ENCODE measurements at regions of chr3 and their contacts with region 1.

Region 1: DNA sequence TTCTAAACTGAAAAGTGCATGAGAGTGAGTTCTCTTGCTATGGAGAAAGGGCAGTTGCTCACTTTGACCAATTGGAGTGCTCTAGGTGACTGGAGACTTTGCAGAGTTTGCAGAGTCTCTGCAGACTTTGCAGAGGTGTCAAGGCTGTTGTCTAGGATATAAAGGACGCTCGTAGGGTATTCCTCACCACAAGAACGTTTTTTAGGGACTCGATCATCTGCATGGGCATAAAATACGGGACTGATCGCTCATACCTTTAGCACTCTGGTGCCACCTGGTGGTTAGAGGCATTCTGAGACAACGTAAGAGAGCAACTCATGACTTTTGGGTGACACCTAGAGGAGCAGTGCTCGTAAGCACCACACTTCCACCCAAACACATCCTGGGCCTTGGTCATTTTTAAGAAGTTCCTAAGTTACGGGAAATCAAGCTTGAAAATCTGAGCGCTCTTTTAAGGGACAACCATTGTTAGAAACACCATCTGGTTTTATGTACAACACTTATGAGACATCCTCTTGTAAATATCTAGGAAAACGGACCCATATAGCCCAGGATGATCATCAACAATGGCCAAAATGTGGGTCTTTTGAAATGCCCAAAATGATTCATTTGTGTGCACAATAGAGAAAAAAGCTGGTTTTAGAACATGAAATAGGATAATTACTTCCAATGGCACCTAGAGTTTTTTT is 51.6 kb upstream of the XCR1 start:
- DNase-seq: peak; percentile 83 to 84
- H3K4me3 ChIP-seq: no peak overlapping the region
- H3K27ac ChIP-seq: no peak overlapping the region; the same call in 1 of the 2 replicates
- H3K4me1 ChIP-seq: peaks cover 49% of the 10 kb centered on the region
- H3K27me3 ChIP-seq: no peaks in the 10 kb centered on the region
- CTCF ChIP-seq: peak; percentile 94

Region 2: GRCh38 chr3:45507820-45508317 is 571.0 kb before region 1 on chr3:
- CTCF ChIA-PET with region 1: no interaction called
- POLR2A ChIA-PET with region 1: no interaction called
- intact Hi-C with region 1: loop called (anchors 5 kb)
- DNase-seq: no peak
- H3K4me3 ChIP-seq: no peak overlapping the region
- H3K27ac ChIP-seq: no peak overlapping the region
- H3K4me1 ChIP-seq: no peaks in the 10 kb centered on the region
- H3K27me3 ChIP-seq: no peaks in the 10 kb centered on the region
- CTCF ChIP-seq: no peak

Region 3: GRCh38 chr3:45760878-45761711 is 317.8 kb before region 1 on chr3:
- CTCF ChIA-PET with region 1: interaction called, 5 read pairs
- POLR2A ChIA-PET with region 1: no interaction called
- intact Hi-C with region 1: loop called (anchors 1 kb)
- DNase-seq: peak; percentile 43 to 48
- H3K4me3 ChIP-seq: no peak overlapping the region
- H3K27ac ChIP-seq: no peak overlapping the region
- H3K4me1 ChIP-seq: no peaks in the 10 kb centered on the region
- H3K27me3 ChIP-seq: no peaks in the 10 kb centered on the region
- CTCF ChIP-seq: peak; percentile 81

Region 4: GRCh38 chr3:45841757-45842491 is 236.9 kb before region 1 on chr3 and contains the start of gene LZTFL1:
- CTCF ChIA-PET with region 1: no interaction called
- POLR2A ChIA-PET with region 1: no interaction called
- intact Hi-C with region 1: loop called (anchors 5 kb)
- DNase-seq: peak; percentile 87 to 92
- H3K4me3 ChIP-seq: peak within 1 kb of the TSS; percentile 93
- H3K27ac ChIP-seq: peak within 1 kb of the TSS; percentile 36
- H3K4me1 ChIP-seq: peaks cover 8% of the 10 kb centered on the region; the same call in 1 of the 2 replicates
- H3K27me3 ChIP-seq: no peaks in the 10 kb centered on the region; the same call in 1 of the 2 replicates
- CTCF ChIP-seq: no peak
- total RNA-seq, gene LZTFL1: 21.2 and 39.2 TPM in 2 replicates

Region 5: DNA sequence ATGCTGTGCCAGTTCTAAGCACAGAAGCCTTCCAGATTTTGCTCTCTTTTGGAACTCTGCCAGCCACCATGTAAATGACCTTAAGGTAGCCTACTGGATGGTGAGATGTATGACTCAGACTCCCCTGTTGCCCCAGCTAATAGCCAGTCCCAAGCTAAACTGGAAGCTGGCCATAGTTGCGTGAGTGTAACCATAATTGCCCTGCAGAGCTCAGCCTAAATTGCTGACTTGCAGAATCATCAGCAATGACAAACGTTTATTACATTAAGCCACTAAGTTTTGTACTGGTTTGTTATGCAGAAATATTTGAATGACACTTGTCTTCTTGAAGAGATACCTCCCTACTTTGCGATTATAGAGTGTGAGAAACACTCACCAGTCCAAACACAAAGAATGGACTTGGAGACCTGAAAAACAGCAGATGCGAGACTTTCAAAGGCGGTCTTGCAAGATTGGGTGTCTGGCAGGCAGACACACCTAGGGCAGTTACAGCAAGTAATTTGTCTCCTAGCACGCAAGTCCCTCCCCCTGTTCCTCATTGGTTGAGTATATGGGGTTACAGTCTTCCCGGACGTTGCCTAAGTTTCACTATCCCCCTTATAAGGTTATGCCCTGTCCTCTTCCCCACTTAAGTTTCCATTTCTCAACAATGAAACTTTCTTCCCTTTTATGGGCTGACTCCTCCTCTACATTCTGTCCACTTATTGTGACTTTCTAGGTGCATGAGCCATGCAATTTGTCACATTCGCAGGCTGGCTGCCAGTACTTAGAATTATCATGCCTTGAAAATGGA is 32.0 kb after region 1 on chr3:
- CTCF ChIA-PET with region 1: no interaction called
- POLR2A ChIA-PET with region 1: no interaction called
- intact Hi-C with region 1: loop called (anchors 2 kb)
- DNase-seq: peak; percentile 72 to 98
- H3K4me3 ChIP-seq: peak overlapping the region; percentile 41; the same call in 1 of the 2 replicates
- H3K27ac ChIP-seq: peak overlapping the region; percentile 98
- H3K4me1 ChIP-seq: peaks cover 76% of the 10 kb centered on the region
- H3K27me3 ChIP-seq: no peaks in the 10 kb centered on the region
- CTCF ChIP-seq: no peak

Region 6: GRCh38 chr3:46208167-46208704 is 129.4 kb after region 1 on chr3 and contains the start of gene CCR1:
- CTCF ChIA-PET with region 1: no interaction called
- POLR2A ChIA-PET with region 1: no interaction called
- intact Hi-C with region 1: loop called (anchors 1 kb)
- DNase-seq: peak; percentile 52 to 68
- H3K4me3 ChIP-seq: no peak within 1 kb of the TSS
- H3K27ac ChIP-seq: peak within 1 kb of the TSS; percentile 27; the same call in 1 of the 2 replicates
- H3K4me1 ChIP-seq: peaks cover 14% of the 10 kb centered on the region
- H3K27me3 ChIP-seq: no peaks in the 10 kb centered on the region
- CTCF ChIP-seq: peak; percentile 77
- total RNA-seq, gene CCR1: 0.28 TPM in 1 of 2 replicates, not detected in the other

Region 7: DNA sequence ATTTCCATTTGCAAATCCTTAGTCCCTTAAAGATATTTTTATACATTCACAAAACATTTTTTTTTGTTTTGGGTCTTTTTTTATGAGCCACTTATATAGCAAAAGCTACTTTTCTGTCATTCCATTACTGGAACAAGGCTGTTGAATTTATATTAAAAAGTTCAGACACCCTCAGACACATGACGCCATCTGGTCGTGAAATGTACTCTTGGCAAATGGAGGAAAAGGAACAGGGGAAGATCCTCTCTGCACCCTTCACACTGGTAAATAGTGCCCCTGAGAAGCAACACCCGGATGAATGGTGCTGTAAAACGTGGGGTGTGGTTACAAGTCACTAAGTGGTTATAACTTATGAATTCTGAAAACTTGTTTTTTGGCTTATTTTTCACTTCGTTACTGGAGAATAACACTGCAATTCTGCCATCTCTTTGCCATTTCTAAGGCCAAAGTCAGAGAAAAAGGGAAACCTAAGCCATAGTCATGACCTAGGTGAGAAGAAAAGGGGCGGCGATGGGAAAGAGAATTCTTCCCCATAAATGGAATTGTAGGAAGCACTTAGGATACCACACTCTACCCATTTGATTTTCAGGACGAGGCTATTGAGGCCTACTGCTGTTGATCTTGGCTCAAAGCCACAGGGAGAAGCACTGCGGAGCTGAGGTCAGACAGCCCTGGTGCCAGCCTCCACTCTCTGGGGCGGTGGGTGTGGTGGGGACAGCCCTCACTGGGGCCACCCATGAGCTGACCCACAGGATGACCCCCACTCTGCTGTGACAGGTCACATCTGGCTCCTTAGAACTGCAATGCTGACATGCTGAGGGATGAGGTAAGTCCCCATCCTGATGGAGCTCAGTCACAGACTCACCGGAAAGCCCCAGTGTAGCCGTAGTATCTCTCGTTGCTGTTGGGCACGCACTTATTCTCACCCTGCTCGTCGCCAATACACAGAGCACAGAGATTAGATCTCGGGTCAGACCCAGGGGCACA is 364.0 kb after region 1 on chr3:
- CTCF ChIA-PET with region 1: no interaction called
- POLR2A ChIA-PET with region 1: no interaction called
- intact Hi-C with region 1: loop called (anchors 2 kb)
- DNase-seq: peak; percentile 46 to 60
- H3K4me3 ChIP-seq: no peak overlapping the region
- H3K27ac ChIP-seq: no peak overlapping the region
- H3K4me1 ChIP-seq: peaks cover 8% of the 10 kb centered on the region; the same call in 1 of the 2 replicates
- H3K27me3 ChIP-seq: no peaks in the 10 kb centered on the region
- CTCF ChIP-seq: peak; percentile 77